CD4-positive, alpha-beta memory T cell (primary cell): ENCODE measurements at regions of chr17 and their contacts with region 1.

Region 1: GRCh38 chr17:55348749-55349354 is 72.8 kb downstream of the MMD start:
- DNase-seq: peak in 4 of 5 donors; percentile 41 to 48 (median 48)
- H3K4me3 ChIP-seq: no peak overlapping the region
- H3K4me3 Mint-ChIP-seq: peak overlapping the region in 7 of 8 donors; percentile 5 to 76 (median 57)
- H3K27ac ChIP-seq: no peak overlapping the region
- H3K27ac Mint-ChIP-seq: peak overlapping the region in 3 of 7 donors; percentile 5 to 54 (median 51)
- H3K4me1 ChIP-seq: peaks cover 35% of the 10 kb centered on the region
- H3K4me1 Mint-ChIP-seq: peaks cover 30 to 46% (median 30%) of the 10 kb centered on the region in 4 donors
- H3K27me3 ChIP-seq: no peaks in the 10 kb centered on the region
- H3K27me3 Mint-ChIP-seq: no peaks in the 10 kb centered on the region

Region 2: GRCh38 chr17:55053855-55054254 is 295.0 kb before region 1 on chr17:
- CTCF ChIA-PET with region 1: interaction called, 3 read pairs
- POLR2A ChIA-PET with region 1: no interaction called
- intact Hi-C with region 1: loop called (anchors 1 kb)
- DNase-seq: peak in 3 of 5 donors; percentile 12 to 22 (median 18)
- H3K4me3 ChIP-seq: no peak overlapping the region
- H3K4me3 Mint-ChIP-seq: no peak overlapping the region
- H3K27ac ChIP-seq: no peak overlapping the region
- H3K27ac Mint-ChIP-seq: peak overlapping the region in 1 of 7 donors; percentile 29
- H3K4me1 ChIP-seq: no peaks in the 10 kb centered on the region
- H3K4me1 Mint-ChIP-seq: no peaks in the 10 kb centered on the region
- H3K27me3 ChIP-seq: no peaks in the 10 kb centered on the region
- H3K27me3 Mint-ChIP-seq: no peaks in the 10 kb centered on the region

Region 3: GRCh38 chr17:55144518-55144917 is 204.3 kb before region 1 on chr17:
- CTCF ChIA-PET with region 1: no interaction called
- POLR2A ChIA-PET with region 1: no interaction called
- intact Hi-C with region 1: no loop called
- DNase-seq: no peak
- H3K4me3 ChIP-seq: no peak overlapping the region
- H3K4me3 Mint-ChIP-seq: no peak overlapping the region
- H3K27ac ChIP-seq: no peak overlapping the region
- H3K27ac Mint-ChIP-seq: no peak overlapping the region
- H3K4me1 ChIP-seq: peaks cover 4% of the 10 kb centered on the region
- H3K4me1 Mint-ChIP-seq: peaks cover 0 to 9% (median 6%) of the 10 kb centered on the region in 4 donors
- H3K27me3 ChIP-seq: no peaks in the 10 kb centered on the region
- H3K27me3 Mint-ChIP-seq: no peaks in the 10 kb centered on the region

Region 4: GRCh38 chr17:55366020-55366481 is 17.2 kb after region 1 on chr17:
- CTCF ChIA-PET with region 1: interaction called, 28 read pairs
- POLR2A ChIA-PET with region 1: no interaction called
- intact Hi-C with region 1: no loop called
- DNase-seq: no peak
- H3K4me3 ChIP-seq: no peak overlapping the region
- H3K4me3 Mint-ChIP-seq: no peak overlapping the region
- H3K27ac ChIP-seq: no peak overlapping the region
- H3K27ac Mint-ChIP-seq: no peak overlapping the region
- H3K4me1 ChIP-seq: no peaks in the 10 kb centered on the region
- H3K4me1 Mint-ChIP-seq: peaks cover 0 to 2% (median 0%) of the 10 kb centered on the region in 4 donors
- H3K27me3 ChIP-seq: peaks cover 3% of the 10 kb centered on the region
- H3K27me3 Mint-ChIP-seq: peaks cover 2 to 5% of the 10 kb centered on the region in 2 donors